ENCODE measurements at regions of chr9 and their contacts with region 1.

Region 1: DNA sequence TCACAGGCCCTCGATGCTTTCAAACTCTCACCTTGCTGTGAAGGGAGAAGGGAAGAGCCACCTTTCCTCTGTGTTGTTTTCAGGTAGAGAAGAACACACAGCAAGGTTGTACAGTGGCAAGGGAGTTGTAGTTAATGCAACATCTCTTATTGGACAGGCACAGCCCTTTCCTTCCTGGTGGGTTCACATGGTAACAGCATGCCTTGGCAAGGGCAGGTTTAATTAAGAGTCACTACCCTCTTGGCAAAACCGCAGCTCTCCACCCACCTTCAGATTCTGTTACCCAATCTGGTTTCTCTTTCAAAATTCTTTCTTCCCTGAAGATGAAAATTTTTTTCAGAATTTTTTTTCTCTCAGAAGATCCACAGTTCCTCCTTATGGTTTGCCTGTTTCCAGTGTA is 253.1 kb downstream of the TLR4 start:
- DNase-seq: no peak
- H3K4me3 ChIP-seq: no peak overlapping the region
- H3K27ac ChIP-seq: no peak overlapping the region
- H3K4me1 ChIP-seq: no peaks in the 10 kb centered on the region
- H3K27me3 ChIP-seq: no peaks in the 10 kb centered on the region
- CTCF ChIP-seq: no peak
- EP300 ChIP-seq: no peak
- POLR2A ChIP-seq: no peak

Region 2: GRCh38 chr9:118059484-118060278 is 102.4 kb after region 1 on chr9:
- in situ Hi-C with region 1: no loop called
- intact Hi-C with region 1: no loop called
- DNase-seq: no peak
- H3K4me3 ChIP-seq: no peak overlapping the region
- H3K27ac ChIP-seq: no peak overlapping the region
- H3K4me1 ChIP-seq: no peaks in the 10 kb centered on the region
- H3K27me3 ChIP-seq: no peaks in the 10 kb centered on the region
- CTCF ChIP-seq: no peak
- EP300 ChIP-seq: no peak
- POLR2A ChIP-seq: no peak

Region 3: GRCh38 chr9:118882684-118883083 is 925.4 kb after region 1 on chr9:
- in situ Hi-C with region 1: no loop called
- intact Hi-C with region 1: no loop called
- DNase-seq: no peak
- H3K4me3 ChIP-seq: no peak overlapping the region
- H3K27ac ChIP-seq: no peak overlapping the region
- H3K4me1 ChIP-seq: no peaks in the 10 kb centered on the region
- H3K27me3 ChIP-seq: no peaks in the 10 kb centered on the region
- CTCF ChIP-seq: no peak
- EP300 ChIP-seq: no peak
- POLR2A ChIP-seq: no peak

Region 4: GRCh38 chr9:119726035-119726434 is 1768.8 kb after region 1 on chr9:
- in situ Hi-C with region 1: no loop called
- intact Hi-C with region 1: loop called (anchors 5 kb)
- DNase-seq: no peak
- H3K4me3 ChIP-seq: no peak overlapping the region
- H3K27ac ChIP-seq: no peak overlapping the region
- H3K4me1 ChIP-seq: no peaks in the 10 kb centered on the region
- H3K27me3 ChIP-seq: no peaks in the 10 kb centered on the region
- CTCF ChIP-seq: no peak
- EP300 ChIP-seq: no peak
- POLR2A ChIP-seq: no peak